ENCODE measurements at regions of chr7 and their contacts with region 1.

Region 1: GRCh38 chr7:151110941-151111645 is 24.8 kb downstream of the AGAP3 start:
- DNase-seq: no peak
- ATAC-seq: peak; percentile 84
- H3K4me3 ChIP-seq: no peak overlapping the region
- H3K27ac ChIP-seq: no peak overlapping the region
- H3K4me1 ChIP-seq: peaks cover 14% of the 10 kb centered on the region
- H3K27me3 ChIP-seq: no peaks in the 10 kb centered on the region
- CTCF ChIP-seq: peak; percentile 94

Region 2: GRCh38 chr7:150378115-150378852 is 732.8 kb before region 1 on chr7:
- CTCF ChIA-PET with region 1: no interaction called
- POLR2A ChIA-PET with region 1: interaction called, 11 read pairs
- in situ Hi-C with region 1: no loop called
- intact Hi-C with region 1: no loop called
- DNase-seq: no peak
- ATAC-seq: peak; percentile 32
- H3K4me3 ChIP-seq: peak overlapping the region; percentile 82 to 92
- H3K27ac ChIP-seq: peak overlapping the region; percentile 98
- H3K4me1 ChIP-seq: peaks cover 74% of the 10 kb centered on the region
- H3K27me3 ChIP-seq: no peaks in the 10 kb centered on the region
- CTCF ChIP-seq: no peak

Region 3: DNA sequence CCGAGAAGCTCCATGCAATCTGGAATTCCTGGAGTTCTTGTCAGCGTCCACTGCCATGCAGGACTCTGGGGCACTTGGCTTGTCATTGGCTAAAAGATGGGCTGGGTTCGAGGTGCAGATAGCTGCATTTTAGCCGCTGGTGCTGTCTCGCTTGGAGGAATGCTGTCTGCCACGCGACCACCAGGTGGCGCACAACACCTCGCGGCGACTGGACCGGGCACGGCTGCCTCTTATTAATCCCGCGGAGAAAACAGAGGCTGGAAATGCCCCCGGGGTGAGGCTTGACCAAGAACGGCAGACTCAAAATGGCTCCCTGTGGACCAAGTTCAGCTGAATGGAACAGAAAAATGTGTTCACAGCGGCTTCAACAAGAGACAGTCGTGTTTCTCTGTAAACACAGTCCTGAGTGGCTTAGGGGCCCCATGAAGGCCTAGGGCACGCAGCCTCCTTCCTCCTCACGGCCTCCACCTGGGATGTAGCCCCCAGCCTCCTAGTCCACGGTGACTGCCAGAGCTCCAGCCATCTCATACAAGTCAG is 212.6 kb before region 1 on chr7:
- CTCF ChIA-PET with region 1: no interaction called
- POLR2A ChIA-PET with region 1: no interaction called
- in situ Hi-C with region 1: no loop called
- intact Hi-C with region 1: loop called (anchors 5 kb)
- DNase-seq: peak; percentile 39
- ATAC-seq: peak; percentile 90
- H3K4me3 ChIP-seq: no peak overlapping the region
- H3K27ac ChIP-seq: no peak overlapping the region
- H3K4me1 ChIP-seq: peaks cover 8% of the 10 kb centered on the region; the same call in 1 of the 2 replicates
- H3K27me3 ChIP-seq: no peaks in the 10 kb centered on the region
- CTCF ChIP-seq: peak; percentile 97

Region 4: DNA sequence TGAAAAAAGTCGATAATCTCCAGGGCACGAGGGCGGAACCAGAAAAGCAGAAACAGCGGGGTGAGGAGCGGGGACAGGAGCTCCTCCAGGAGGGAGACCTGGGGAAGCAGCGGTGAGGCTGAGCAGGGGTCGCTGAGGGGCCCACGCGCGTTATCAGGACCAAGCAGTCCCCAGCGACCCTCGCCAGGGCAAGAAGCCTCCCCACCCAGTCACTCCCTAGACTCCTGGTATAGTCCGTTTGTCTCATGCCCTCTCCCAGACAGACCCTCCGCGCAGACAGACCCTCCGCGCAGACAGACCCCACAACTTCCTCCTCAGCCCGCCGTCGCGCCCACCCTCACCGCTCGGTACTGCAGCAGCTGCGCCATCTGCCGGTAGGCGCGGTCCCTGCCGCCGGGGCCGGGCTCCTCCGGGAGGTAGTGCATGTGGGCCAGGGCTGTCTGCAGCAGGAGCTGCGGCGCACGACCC is 93.1 kb before region 1 on chr7:
- CTCF ChIA-PET with region 1: interaction called, 4 read pairs
- POLR2A ChIA-PET with region 1: no interaction called
- in situ Hi-C with region 1: no loop called
- intact Hi-C with region 1: loop called (anchors 2 kb)
- DNase-seq: no peak
- ATAC-seq: peak; percentile 88
- H3K4me3 ChIP-seq: peak overlapping the region; percentile 7 to 52; a peak in 3 of 4 replicates
- H3K27ac ChIP-seq: no peak overlapping the region
- H3K4me1 ChIP-seq: peaks cover 8% of the 10 kb centered on the region; the same call in 1 of the 2 replicates
- H3K27me3 ChIP-seq: no peaks in the 10 kb centered on the region
- CTCF ChIP-seq: peak; percentile 99

Region 5: DNA sequence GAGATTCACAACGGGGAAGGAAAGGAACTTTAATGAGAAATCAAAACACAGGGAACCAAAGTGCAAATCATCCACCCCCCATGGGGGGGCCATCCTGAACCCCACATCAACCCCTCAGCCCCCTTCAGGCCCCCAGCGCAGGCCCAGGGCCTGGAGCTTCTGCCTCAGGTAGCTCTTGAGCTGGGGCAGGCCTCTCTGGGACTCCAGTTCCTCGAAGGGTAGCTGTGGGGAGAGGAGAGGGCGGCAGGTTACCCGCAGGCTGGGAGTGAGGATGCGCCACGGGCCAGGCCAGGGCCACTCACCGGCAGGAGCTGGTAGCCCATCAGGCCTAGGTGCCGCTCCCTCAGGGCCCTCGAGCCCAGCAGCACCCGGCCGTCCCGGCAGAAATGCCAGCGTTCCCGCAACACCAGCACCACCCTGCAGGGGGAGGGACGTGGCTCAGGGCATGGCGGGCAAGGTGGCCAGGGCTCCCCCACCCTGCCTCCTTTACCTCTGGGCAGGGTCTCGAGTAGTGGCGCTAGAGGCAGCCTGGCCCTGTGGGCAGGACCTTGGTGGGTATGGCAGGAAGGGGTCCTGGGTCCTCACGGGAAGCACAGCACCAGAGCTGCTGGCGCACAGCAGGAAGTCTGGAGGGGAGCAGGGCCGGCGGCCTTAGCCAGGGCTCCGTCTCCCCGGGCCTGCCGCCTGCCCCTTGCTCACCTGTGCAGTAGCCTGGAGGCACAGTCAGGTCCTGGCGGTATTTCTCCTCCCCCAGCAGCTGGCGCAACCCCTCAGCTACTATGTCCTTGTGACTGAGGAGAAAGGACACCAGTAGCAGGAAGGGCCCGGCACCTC is 34.3 kb before region 1 on chr7:
- CTCF ChIA-PET with region 1: interaction called, 3 read pairs
- POLR2A ChIA-PET with region 1: no interaction called
- in situ Hi-C with region 1: no loop called
- intact Hi-C with region 1: loop called (anchors 5 kb)
- DNase-seq: no peak
- ATAC-seq: peak; percentile 52
- H3K4me3 ChIP-seq: no peak overlapping the region
- H3K27ac ChIP-seq: peak overlapping the region; percentile 91
- H3K4me1 ChIP-seq: peaks cover 44% of the 10 kb centered on the region
- H3K27me3 ChIP-seq: no peaks in the 10 kb centered on the region
- CTCF ChIP-seq: no peak; the same call in 1 of the 2 replicates

Region 6: DNA sequence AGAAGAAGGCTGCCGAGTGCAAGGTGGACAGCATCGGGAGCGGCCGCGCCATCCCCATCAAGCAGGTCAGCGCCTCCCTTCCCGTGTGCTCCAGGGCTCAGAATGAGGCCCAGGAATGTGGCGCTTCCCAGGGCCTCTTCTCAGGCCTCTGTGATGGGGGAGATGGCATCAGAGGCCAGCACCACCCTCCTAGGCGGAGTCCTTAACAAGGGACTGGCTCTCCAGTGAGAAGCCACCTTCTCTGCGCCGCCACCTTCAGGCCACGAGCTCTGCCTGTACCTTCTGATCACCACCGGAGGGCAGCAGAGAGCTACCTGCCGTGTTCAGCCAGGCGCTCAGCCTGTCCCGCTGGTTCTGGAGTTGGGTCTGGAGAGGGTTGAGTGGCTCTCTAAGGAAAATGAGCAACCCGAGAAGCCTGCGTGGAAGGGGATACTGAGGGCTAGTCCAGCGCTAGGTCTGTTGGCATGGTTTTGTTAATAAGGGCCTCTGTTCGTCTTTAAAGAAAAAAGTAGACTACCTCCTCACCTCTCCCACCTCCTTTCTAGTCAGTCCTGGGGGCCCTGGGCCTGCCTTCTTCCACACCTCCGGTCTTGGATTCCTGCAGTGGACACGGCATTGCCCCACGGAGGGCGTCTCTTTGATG is 12.8 kb after region 1 on chr7:
- CTCF ChIA-PET with region 1: no interaction called
- POLR2A ChIA-PET with region 1: no interaction called
- in situ Hi-C with region 1: no loop called
- intact Hi-C with region 1: no loop called
- DNase-seq: peak; percentile 78
- ATAC-seq: peak; percentile 94
- H3K4me3 ChIP-seq: no peak overlapping the region
- H3K27ac ChIP-seq: no peak overlapping the region
- H3K4me1 ChIP-seq: no peaks in the 10 kb centered on the region
- H3K27me3 ChIP-seq: no peaks in the 10 kb centered on the region
- CTCF ChIP-seq: peak; percentile 99

Region 7: GRCh38 chr7:151261529-151261928 is 150.4 kb after region 1 on chr7:
- CTCF ChIA-PET with region 1: no interaction called
- POLR2A ChIA-PET with region 1: no interaction called
- in situ Hi-C with region 1: no loop called
- intact Hi-C with region 1: no loop called
- DNase-seq: no peak
- ATAC-seq: no peak
- H3K4me3 ChIP-seq: no peak overlapping the region
- H3K27ac ChIP-seq: no peak overlapping the region
- H3K4me1 ChIP-seq: no peaks in the 10 kb centered on the region
- H3K27me3 ChIP-seq: no peaks in the 10 kb centered on the region
- CTCF ChIP-seq: no peak